ENCODE measurements at regions of chr14 and their contacts with region 1.

Region 1: DNA sequence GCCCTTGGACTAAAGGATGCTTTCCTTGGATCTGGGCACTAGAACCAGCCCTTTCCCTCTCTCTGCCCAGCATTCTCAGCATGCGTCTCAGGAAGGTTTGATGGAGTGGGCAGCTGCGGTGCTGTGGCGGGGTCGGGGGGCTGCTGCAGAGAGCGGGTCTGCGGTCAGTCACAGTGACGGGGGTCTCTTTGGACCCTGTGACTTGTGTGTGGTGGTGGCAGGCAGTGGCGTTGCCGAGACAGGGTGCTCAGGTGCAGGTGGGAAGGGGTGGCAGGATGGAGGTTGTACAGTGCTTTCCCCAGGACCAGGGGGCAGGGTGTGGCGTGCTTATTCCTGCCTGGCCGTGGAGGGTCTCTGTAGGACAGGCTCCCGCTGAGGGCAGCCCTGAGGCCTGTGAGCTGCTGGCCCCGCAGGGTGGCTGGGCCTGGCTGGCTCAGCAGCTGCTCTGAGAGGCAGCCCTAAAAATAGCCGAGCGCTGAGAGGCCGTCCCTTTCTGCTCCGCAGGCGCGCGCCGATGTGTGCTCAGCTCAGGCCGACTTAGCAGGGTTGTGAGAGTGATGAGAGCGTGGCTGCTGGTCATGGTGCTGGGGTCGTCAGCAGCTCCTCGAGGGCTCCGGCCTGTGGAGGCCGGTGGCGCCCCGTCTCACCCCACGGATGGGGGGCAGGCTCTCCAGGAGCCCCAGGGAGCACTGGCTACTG is 9.7 kb downstream of the PACS2 start:
- DNase-seq: no peak
- H3K4me3 ChIP-seq: no peak overlapping the region
- H3K27ac ChIP-seq: no peak overlapping the region
- H3K4me1 ChIP-seq: peaks cover 0 to 5% (median 4%) of the 10 kb centered on the region in 4 experiments
- H3K27me3 ChIP-seq: no peaks in the 10 kb centered on the region

Region 2: DNA sequence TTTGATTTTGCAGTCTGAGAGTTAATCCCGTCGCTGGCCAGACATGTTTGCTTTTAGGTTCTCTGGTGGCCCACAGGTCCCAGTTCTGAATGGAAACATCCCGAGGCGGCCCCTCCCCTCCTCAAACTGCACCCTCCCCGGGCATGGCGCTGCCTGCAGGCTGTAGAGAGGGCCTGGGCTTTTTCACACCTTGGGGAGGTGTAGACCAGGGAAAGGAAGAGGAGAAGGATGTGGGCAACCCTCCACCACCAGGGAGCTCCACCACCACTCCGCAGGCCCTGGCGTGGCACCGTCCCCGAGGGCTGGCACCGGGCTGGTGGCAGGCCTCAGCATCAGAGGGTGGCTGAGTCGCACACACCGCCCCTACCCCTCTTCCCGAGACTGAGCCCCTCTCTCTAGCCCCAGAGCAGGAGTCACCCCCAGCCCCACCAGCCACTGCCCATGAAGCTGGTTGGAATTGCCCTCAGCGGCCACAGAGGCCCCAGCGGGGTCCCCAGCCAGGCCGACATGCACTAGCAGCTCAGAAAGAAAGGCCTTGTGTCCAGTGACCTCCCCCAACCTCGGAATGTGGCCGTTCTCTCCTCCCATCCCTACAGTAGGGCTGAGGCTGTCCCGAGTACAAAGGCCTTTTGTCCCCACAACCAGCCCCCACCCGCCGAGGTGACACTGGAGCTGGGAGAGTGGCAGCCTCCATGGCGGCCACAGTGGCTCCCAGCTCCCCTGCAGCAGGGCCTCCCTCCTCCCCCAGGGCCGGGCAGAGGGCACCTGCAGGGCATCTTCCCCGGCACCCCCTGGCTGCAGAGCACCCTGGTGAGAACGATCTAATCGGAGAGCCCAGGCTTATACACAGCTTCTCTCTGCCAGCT is 658.3 kb before region 1 on chr14:
- CTCF ChIA-PET with region 1: no interaction called
- POLR2A ChIA-PET with region 1: no interaction called
- DNase-seq: peak in 2 of 3 donors; percentile 49 to 58
- H3K4me3 ChIP-seq: peak overlapping the region in 1 of 7 experiments; percentile 11
- H3K27ac ChIP-seq: no peak overlapping the region
- H3K4me1 ChIP-seq: peaks cover 0 to 14% (median 8%) of the 10 kb centered on the region in 4 experiments
- H3K27me3 ChIP-seq: no peaks in the 10 kb centered on the region

Region 3: DNA sequence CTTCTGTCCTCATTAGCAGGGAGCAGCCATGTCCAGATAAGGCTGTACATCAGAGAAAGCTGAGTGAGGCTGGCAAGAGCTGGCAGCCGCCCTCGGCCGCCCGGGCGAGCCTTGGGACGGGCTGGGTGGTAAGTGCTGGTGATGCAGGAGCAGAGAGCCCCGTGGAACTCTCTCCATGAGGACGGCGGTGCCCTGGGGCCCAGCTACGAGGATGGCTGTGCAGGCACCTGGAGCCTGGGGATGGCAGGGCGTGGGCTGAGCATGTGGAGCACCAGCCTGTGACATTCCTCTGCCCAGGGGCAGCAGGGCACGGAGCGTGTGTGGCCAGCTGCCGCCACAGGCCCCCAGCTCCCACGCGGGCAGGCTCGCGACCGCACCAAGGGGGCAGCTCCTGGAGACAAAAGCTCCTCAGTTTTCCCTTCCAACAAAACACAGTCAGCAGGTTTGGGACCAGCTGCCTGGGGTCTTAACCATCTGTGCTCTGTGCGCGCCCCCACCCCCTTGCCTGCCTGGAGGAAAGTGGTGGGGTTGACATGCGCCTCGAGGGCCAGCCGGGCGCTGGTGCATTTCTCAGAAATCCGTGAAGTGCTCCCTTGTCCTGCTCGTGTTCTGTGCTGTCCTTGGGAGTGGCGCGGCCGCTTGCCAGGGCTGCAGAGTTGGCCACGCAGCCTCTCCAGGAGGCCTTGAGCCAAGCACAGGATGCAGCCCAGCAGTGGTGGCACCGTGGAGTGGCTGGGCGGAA is 11.7 kb after region 1 on chr14:
- CTCF ChIA-PET with region 1: interaction called, 10 read pairs
- POLR2A ChIA-PET with region 1: interaction called, 3 read pairs
- DNase-seq: no peak
- H3K4me3 ChIP-seq: no peak overlapping the region
- H3K27ac ChIP-seq: no peak overlapping the region
- H3K4me1 ChIP-seq: peaks cover 0 to 44% (median 34%) of the 10 kb centered on the region in 4 experiments
- H3K27me3 ChIP-seq: no peaks in the 10 kb centered on the region

Measured in common myeloid progenitor, CD34-positive (primary cell).